Panc1 (cell line): ENCODE measurements at regions of chr19 and their contacts with region 1.

Region 1: DNA sequence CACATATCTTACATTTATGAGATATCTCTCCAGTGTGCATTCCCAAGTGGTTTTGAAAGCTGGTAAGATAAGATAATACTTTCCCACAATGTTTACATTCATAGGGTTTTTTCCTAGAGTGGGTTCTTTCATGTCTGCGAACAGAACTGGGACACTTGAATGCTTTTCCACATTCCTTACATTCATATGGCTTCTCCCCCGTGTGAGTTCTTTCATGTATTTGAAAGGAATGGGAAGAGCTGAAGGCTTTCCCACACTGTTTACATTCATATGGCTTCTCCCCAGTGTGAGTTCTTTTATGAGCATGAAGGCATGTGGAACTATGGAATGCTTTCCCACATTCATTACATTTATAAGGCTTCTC is 19.7 kb downstream of the ZNF433 start:
- DNase-seq: no peak
- ATAC-seq: no peak
- H3K4me3 ChIP-seq: no peak overlapping the region
- H3K27ac ChIP-seq: no peak overlapping the region
- H3K4me1 ChIP-seq: no peaks in the 10 kb centered on the region
- H3K27me3 ChIP-seq: no peaks in the 10 kb centered on the region
- CTCF ChIP-seq: no peak

Region 2: GRCh38 chr19:12043752-12044422 is 28.2 kb after region 1 on chr19:
- CTCF ChIA-PET with region 1: no interaction called
- POLR2A ChIA-PET with region 1: interaction called, 11 read pairs
- in situ Hi-C with region 1: no loop called
- intact Hi-C with region 1: no loop called
- DNase-seq: no peak
- ATAC-seq: no peak
- H3K4me3 ChIP-seq: no peak overlapping the region
- H3K27ac ChIP-seq: no peak overlapping the region
- H3K4me1 ChIP-seq: no peaks in the 10 kb centered on the region
- H3K27me3 ChIP-seq: no peaks in the 10 kb centered on the region
- CTCF ChIP-seq: no peak